HEK293 (cell line): ENCODE measurements at regions of chr9 and their contacts with region 1.

Region 1: DNA sequence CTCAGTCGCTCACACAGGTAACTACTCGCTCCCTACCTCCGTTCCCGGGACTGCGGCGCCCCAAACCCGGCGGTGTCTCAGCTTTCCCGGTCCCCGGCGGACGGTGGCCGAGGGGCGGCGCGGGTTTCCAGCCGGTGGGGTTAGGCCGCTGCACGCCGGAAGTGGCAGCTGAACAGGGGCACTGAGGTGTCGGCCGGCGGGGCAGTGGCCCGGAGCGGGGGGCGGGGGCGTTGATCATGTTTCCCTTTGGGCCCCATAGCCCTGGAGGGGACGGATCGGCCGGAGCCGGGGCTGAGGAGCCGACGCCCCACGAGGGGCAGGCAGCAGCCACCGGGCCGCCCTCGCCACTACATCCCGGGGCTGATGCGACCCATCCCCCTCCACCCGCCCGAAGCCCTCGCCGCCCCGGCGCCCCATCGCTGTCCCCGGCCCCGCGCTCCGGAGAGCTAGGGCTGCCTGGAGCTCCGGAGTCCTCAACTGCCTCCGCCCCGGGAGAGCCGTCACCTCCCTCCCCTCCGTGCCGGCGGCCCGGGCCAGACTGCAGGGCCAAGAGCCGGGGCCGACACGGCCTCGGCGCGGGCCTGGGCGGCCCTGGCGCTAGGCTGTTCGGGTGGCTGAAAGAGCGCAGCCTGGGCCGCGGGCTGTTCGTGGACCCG is at the start of gene DCAF10:
- H3K4me3 ChIP-seq: peak within 1 kb of the TSS; percentile 55
- H3K27ac ChIP-seq: peak within 1 kb of the TSS; percentile 76
- H3K4me1 ChIP-seq: no peaks in the 10 kb centered on the region
- CTCF ChIP-seq: peak; percentile 57

Region 2: GRCh38 chr9:37719526-37719925 is 81.2 kb before region 1 on chr9:
- CTCF ChIA-PET with region 1: no interaction called
- POLR2A ChIA-PET with region 1: no interaction called
- H3K4me3 ChIP-seq: no peak overlapping the region
- H3K27ac ChIP-seq: no peak overlapping the region
- H3K4me1 ChIP-seq: no peaks in the 10 kb centered on the region
- CTCF ChIP-seq: no peak

Region 3: DNA sequence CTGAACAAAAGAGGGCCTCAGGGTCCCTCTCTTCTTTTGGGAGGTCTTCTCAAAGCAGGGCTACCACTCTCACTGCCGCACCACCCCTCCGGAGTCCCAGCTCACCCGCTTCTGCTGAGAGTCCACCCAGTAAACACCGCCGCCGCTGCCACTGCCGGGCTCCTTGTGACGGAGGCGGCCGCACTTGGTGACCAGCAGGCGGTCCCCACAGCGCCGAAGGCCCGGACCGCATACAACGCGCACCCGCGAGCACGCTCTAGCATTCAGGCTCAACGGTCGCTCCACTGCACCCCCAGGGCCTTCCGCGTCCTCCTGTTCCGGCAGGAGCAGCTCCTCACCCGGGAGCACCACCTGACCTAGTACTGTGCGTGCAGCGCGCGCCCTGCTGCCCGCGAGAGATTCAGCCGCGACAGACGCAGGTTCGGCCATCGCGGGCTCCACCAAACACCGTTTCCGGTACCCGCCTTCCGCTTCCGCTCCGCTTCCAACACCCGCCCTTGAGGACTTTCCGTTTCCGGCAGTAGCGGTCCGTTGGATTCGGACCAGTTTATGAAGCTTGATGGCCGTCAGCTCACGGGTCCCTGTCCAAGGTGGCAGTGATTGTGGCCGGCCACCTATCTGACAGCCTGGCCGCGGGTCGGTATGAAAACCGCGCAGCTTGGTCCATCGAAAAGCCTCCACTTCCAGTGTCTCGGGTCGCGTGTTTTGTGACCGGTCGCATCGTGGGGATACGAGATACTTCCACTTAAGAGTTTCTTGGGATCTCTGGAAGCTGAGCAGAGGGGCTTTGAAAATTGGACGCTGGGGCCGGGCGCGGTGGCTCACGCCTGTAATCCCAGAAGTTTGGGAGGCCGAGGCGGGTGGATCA is 15.9 kb before region 1 on chr9 and contains the start of gene EXOSC3:
- CTCF ChIA-PET with region 1: interaction called, 3 read pairs
- POLR2A ChIA-PET with region 1: interaction called, 44 read pairs
- H3K4me3 ChIP-seq: peak within 1 kb of the TSS; percentile 94
- H3K27ac ChIP-seq: peak within 1 kb of the TSS; percentile 51; the same call in 1 of the 2 replicates
- H3K4me1 ChIP-seq: no peaks in the 10 kb centered on the region
- CTCF ChIP-seq: peak; percentile 89

Region 4: DNA sequence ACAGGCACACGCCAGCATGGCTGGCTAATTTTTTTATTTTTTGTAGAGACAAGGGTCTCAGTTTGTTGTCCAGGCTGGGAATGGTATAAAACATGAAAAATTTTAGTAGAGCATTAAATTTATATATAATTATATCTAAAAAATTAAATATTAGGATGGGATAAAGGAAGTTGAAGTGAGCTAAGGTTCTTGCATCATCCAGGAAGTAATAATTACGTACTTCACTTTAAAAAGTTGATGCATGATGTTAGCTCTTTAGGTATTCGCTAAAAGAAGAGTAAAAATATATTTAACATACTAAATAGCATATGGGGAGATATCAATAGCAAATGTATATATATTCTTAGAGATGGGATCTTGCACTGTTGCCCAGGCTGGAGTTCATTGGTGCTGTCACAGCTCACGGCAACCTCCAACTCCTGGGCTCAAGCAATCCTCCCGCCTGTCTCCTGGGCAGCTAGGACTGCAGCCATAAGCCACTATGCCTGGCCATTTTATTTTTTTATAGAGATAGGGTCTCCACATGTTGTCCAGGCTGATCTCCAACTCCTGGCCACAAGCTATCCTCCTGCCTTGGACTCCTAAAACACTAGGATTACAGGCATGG is 12.1 kb after region 1 on chr9:
- CTCF ChIA-PET with region 1: no interaction called
- POLR2A ChIA-PET with region 1: interaction called, 12 read pairs
- H3K4me3 ChIP-seq: no peak overlapping the region
- H3K27ac ChIP-seq: no peak overlapping the region
- H3K4me1 ChIP-seq: no peaks in the 10 kb centered on the region
- CTCF ChIP-seq: no peak